Activated naive CD4-positive, alpha-beta T cell treated with anti-CD3 and anti-CD28 coated beads for 36 hours (primary cell): ENCODE measurements at regions of chrX and their contacts with region 1.

Region 1: DNA sequence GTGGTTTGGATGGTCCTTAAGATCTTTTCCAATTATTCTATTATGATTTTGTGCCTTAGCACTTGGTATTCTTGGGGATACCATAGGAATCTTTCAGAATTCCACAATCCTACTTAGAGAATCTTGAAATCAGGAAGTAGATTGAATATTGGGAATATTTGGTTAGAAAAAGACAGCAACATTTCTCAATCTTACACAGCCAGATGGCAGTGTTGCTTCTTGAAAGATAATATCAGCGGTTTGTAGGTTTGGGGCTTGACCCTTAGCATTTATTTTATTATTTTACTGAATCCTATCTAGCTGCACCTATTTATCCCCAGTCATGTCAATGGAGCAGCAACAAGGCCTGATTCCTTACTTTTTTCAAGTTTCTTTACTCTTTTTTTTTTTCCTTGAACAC is 28.6 kb downstream of the MAGEB1 start:
- DNase-seq: no peak
- H3K4me3 Mint-ChIP-seq: no peak overlapping the region
- H3K27ac Mint-ChIP-seq: no peak overlapping the region
- H3K4me1 Mint-ChIP-seq: peaks cover 5% of the 10 kb centered on the region
- H3K27me3 Mint-ChIP-seq: no peaks in the 10 kb centered on the region

Region 2: DNA sequence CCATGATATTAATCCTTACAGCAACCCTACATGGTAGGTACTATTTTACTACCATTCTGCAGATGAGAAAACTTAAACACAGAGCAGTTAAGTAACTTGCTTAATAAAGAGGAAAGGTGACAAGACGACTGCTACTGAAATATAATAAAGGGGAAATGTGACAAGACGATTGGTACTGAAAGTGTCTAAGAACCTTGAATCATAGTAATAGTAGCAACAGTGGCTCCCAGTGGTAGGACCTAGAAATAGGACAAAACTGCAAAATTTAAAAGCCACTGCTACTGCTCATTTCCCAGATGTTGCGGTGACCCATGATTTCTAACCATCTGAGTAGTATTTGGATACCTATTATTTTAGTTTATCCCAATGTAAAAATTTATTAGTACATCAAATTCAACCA is 212.6 kb after region 1 on chrX:
- CTCF ChIA-PET with region 1: no interaction called
- intact Hi-C with region 1: loop called (anchors 5 kb)
- DNase-seq: no peak
- H3K4me3 Mint-ChIP-seq: no peak overlapping the region
- H3K27ac Mint-ChIP-seq: no peak overlapping the region
- H3K4me1 Mint-ChIP-seq: no peaks in the 10 kb centered on the region
- H3K27me3 Mint-ChIP-seq: no peaks in the 10 kb centered on the region

Region 3: GRCh38 chrX:30504309-30504708 is 228.8 kb after region 1 on chrX:
- CTCF ChIA-PET with region 1: interaction called, 3 read pairs
- intact Hi-C with region 1: loop called (anchors 2 kb)
- DNase-seq: no peak
- H3K4me3 Mint-ChIP-seq: no peak overlapping the region
- H3K27ac Mint-ChIP-seq: no peak overlapping the region
- H3K4me1 Mint-ChIP-seq: no peaks in the 10 kb centered on the region
- H3K27me3 Mint-ChIP-seq: no peaks in the 10 kb centered on the region

Region 4: DNA sequence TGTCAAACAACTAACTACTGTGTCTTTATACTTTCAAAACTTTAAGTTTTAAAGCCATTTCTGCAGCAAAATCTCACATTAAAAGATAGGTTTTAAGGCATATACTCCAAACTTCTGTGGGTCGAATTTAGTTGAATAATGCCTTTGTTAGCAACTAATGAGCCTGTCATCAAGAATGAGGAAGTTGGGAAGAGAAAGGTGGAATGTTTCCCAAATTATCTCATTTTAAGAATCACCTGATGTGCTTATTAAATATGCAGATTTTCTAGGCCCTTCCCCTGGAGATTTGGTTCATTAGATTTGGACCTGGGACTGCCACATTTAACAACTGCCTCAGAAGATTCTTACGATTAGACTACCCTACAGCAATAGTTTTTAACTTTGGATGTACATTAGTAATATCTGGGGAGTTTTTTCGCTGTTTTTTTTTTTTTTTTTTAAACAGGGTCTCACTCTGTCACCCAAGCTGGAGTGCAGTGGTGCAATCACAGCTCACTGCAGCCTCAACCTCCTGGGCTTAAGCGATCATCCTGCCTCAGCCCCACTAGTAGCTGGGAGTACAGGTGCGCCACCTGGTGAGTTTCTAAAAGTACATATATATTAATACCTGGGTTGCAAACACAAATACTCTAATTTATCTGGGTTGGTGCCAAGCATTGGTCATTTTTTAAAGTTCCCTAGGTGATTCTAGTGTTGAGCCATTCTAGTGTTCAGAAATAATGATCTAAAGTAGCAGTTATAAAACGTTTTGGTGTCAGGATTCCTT is 318.1 kb after region 1 on chrX:
- CTCF ChIA-PET with region 1: no interaction called
- intact Hi-C with region 1: loop called (anchors 10 kb)
- DNase-seq: peak; percentile 48
- H3K4me3 Mint-ChIP-seq: no peak overlapping the region
- H3K27ac Mint-ChIP-seq: no peak overlapping the region
- H3K4me1 Mint-ChIP-seq: peaks cover 18% of the 10 kb centered on the region
- H3K27me3 Mint-ChIP-seq: no peaks in the 10 kb centered on the region